Colonic mucosa (tissue), 4 donors: ENCODE measurements at regions of chr6 and their contacts with region 1.

Region 1: GRCh38 chr6:42661540-42662153 is 60.8 kb downstream of the PRPH2 start:
- DNase-seq: peak; percentile 85
- H3K4me3 ChIP-seq: no peak overlapping the region
- H3K27ac ChIP-seq: no peak overlapping the region
- H3K4me1 ChIP-seq: no peaks in the 10 kb centered on the region
- H3K27me3 ChIP-seq: no peaks in the 10 kb centered on the region
- CTCF ChIP-seq: peak; percentile 95

Region 2: GRCh38 chr6:42726485-42727086 is 64.9 kb after region 1 on chr6:
- intact Hi-C with region 1: loop called (anchors 5 kb)
- DNase-seq: peak; percentile 81
- H3K4me3 ChIP-seq: peak overlapping the region; percentile 49
- H3K27ac ChIP-seq: peak overlapping the region; percentile 43
- H3K4me1 ChIP-seq: no peaks in the 10 kb centered on the region
- H3K27me3 ChIP-seq: no peaks in the 10 kb centered on the region
- CTCF ChIP-seq: peak; percentile 90

Region 3: DNA sequence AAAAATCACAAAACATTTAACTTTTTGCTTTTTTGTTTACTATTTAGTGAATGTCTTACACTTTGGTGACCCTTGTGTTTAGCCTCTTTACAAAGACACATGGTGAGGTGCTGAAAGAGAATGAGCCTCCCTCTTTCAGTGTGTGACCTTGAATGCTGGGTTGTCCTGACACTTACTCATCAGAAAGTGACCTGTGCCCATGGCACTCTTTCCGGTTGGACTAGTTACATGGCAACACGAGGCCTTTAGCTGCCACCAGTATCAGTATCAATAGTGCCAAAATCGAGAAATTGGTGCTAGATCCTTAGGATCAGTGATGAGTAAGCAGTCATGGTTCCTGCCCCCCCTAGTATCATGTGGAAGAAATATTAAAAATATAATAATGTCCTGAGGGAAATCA is 216.0 kb after region 1 on chr6:
- intact Hi-C with region 1: loop called (anchors 2 kb)
- DNase-seq: no peak
- H3K4me3 ChIP-seq: no peak overlapping the region
- H3K27ac ChIP-seq: no peak overlapping the region
- H3K4me1 ChIP-seq: peaks cover 4% of the 10 kb centered on the region
- H3K27me3 ChIP-seq: no peaks in the 10 kb centered on the region
- CTCF ChIP-seq: no peak